Naive thymus-derived CD4-positive, alpha-beta T cell (primary cell): ENCODE measurements at regions of chr6 and their contacts with region 1.

Region 1: GRCh38 chr6:144095331-144096002 is at the start of gene SF3B5:
- DNase-seq: peak; percentile 86 to 99 (median 97)
- ATAC-seq: peak; percentile 98
- H3K4me3 ChIP-seq: peak within 1 kb of the TSS; percentile 98
- H3K4me3 Mint-ChIP-seq: peak within 1 kb of the TSS; percentile 93 to 100 (median 98)
- H3K27ac ChIP-seq: peak within 1 kb of the TSS; percentile 92
- H3K27ac Mint-ChIP-seq: peak within 1 kb of the TSS; percentile 96 to 100 (median 98)
- H3K4me1 ChIP-seq: peaks cover 13 to 14% of the 10 kb centered on the region in 2 donors
- H3K4me1 Mint-ChIP-seq: peaks cover 15 to 38% (median 32%) of the 10 kb centered on the region in 7 donors
- H3K27me3 ChIP-seq: no peaks in the 10 kb centered on the region
- H3K27me3 Mint-ChIP-seq: peaks cover 0 to 10% (median 0%) of the 10 kb centered on the region in 5 donors
- total RNA-seq, gene SF3B5: 89.2 to 155 (median 122) TPM

Region 2: GRCh38 chr6:143060354-143060805 is 1035.1 kb before region 1 on chr6:
- CTCF ChIA-PET with region 1: no interaction called
- POLR2A ChIA-PET with region 1: no interaction called
- intact Hi-C with region 1: loop called in 1 of 2 experiments (anchors 2 kb)
- DNase-seq: peak; percentile 63 to 82 (median 72)
- ATAC-seq: peak; percentile 85
- H3K4me3 ChIP-seq: peak overlapping the region; percentile 73
- H3K4me3 Mint-ChIP-seq: peak overlapping the region; percentile 88 to 98 (median 94)
- H3K27ac ChIP-seq: peak overlapping the region; percentile 79
- H3K27ac Mint-ChIP-seq: peak overlapping the region; percentile 92 to 98 (median 96)
- H3K4me1 ChIP-seq: peaks cover 8% of the 10 kb centered on the region in 2 donors
- H3K4me1 Mint-ChIP-seq: peaks cover 16 to 34% (median 28%) of the 10 kb centered on the region in 7 donors
- H3K27me3 ChIP-seq: no peaks in the 10 kb centered on the region
- H3K27me3 Mint-ChIP-seq: no peaks in the 10 kb centered on the region

Region 3: GRCh38 chr6:143575440-143575839 is 520.0 kb before region 1 on chr6:
- CTCF ChIA-PET with region 1: no interaction called
- POLR2A ChIA-PET with region 1: no interaction called
- intact Hi-C with region 1: loop called (anchors 1 kb)
- DNase-seq: peak in 8 of 9 donors; percentile 34 to 79 (median 67)
- ATAC-seq: peak; percentile 99
- H3K4me3 ChIP-seq: no peak overlapping the region
- H3K4me3 Mint-ChIP-seq: no peak overlapping the region
- H3K27ac ChIP-seq: no peak overlapping the region
- H3K27ac Mint-ChIP-seq: peak overlapping the region in 1 of 9 donors; percentile 15
- H3K4me1 ChIP-seq: no peaks in the 10 kb centered on the region
- H3K4me1 Mint-ChIP-seq: peaks cover 0 to 9% (median 0%) of the 10 kb centered on the region in 7 donors
- H3K27me3 ChIP-seq: no peaks in the 10 kb centered on the region
- H3K27me3 Mint-ChIP-seq: no peaks in the 10 kb centered on the region

Region 4: GRCh38 chr6:144013486-144013909 is 82.0 kb before region 1 on chr6:
- CTCF ChIA-PET with region 1: no interaction called
- POLR2A ChIA-PET with region 1: interaction called, 3 read pairs
- intact Hi-C with region 1: loop called (anchors 2 to 5 kb)
- DNase-seq: peak; percentile 18 to 58 (median 45)
- ATAC-seq: peak; percentile 54
- H3K4me3 ChIP-seq: no peak overlapping the region
- H3K4me3 Mint-ChIP-seq: no peak overlapping the region
- H3K27ac ChIP-seq: no peak overlapping the region
- H3K27ac Mint-ChIP-seq: peak overlapping the region in 1 of 9 donors; percentile 9
- H3K4me1 ChIP-seq: no peaks in the 10 kb centered on the region
- H3K4me1 Mint-ChIP-seq: peaks cover 0 to 4% (median 0%) of the 10 kb centered on the region in 7 donors
- H3K27me3 ChIP-seq: peaks cover 0 to 6% of the 10 kb centered on the region in 2 donors
- H3K27me3 Mint-ChIP-seq: peaks cover 11 to 45% (median 28%) of the 10 kb centered on the region in 5 donors

Region 5: GRCh38 chr6:144115219-144115618 is 19.8 kb after region 1 on chr6:
- CTCF ChIA-PET with region 1: no interaction called
- POLR2A ChIA-PET with region 1: no interaction called
- intact Hi-C with region 1: no loop called
- DNase-seq: no peak
- ATAC-seq: no peak
- H3K4me3 ChIP-seq: no peak overlapping the region
- H3K4me3 Mint-ChIP-seq: no peak overlapping the region
- H3K27ac ChIP-seq: no peak overlapping the region
- H3K27ac Mint-ChIP-seq: no peak overlapping the region
- H3K4me1 ChIP-seq: no peaks in the 10 kb centered on the region
- H3K4me1 Mint-ChIP-seq: no peaks in the 10 kb centered on the region
- H3K27me3 ChIP-seq: no peaks in the 10 kb centered on the region
- H3K27me3 Mint-ChIP-seq: peaks cover 0 to 7% (median 0%) of the 10 kb centered on the region in 5 donors

Region 6: GRCh38 chr6:144149891-144150709 is 54.6 kb after region 1 on chr6 and contains the start of gene STX11:
- CTCF ChIA-PET with region 1: no interaction called
- POLR2A ChIA-PET with region 1: interaction called, 3 read pairs
- intact Hi-C with region 1: loop called (anchors 1 kb)
- DNase-seq: peak; percentile 37 to 88 (median 51)
- ATAC-seq: peak; percentile 86
- H3K4me3 ChIP-seq: peak within 1 kb of the TSS; percentile 69
- H3K4me3 Mint-ChIP-seq: peak within 1 kb of the TSS; percentile 91 to 98 (median 95)
- H3K27ac ChIP-seq: peak within 1 kb of the TSS; percentile 62
- H3K27ac Mint-ChIP-seq: peak within 1 kb of the TSS; percentile 89 to 98 (median 94)
- H3K4me1 ChIP-seq: peaks cover 0 to 17% of the 10 kb centered on the region in 2 donors
- H3K4me1 Mint-ChIP-seq: peaks cover 6 to 43% (median 15%) of the 10 kb centered on the region in 7 donors
- H3K27me3 ChIP-seq: no peaks in the 10 kb centered on the region
- H3K27me3 Mint-ChIP-seq: peaks cover 0 to 2% (median 0%) of the 10 kb centered on the region in 5 donors
- total RNA-seq, gene STX11: 2.6 to 60.5 (median 11.6) TPM

Region 7: GRCh38 chr6:144334131-144334708 is 238.8 kb after region 1 on chr6:
- CTCF ChIA-PET with region 1: no interaction called
- POLR2A ChIA-PET with region 1: interaction called, 3 read pairs
- intact Hi-C with region 1: loop called in 1 of 2 experiments (anchors 1 kb)
- DNase-seq: peak; percentile 24 to 87 (median 83)
- ATAC-seq: peak; percentile 91
- H3K4me3 ChIP-seq: peak overlapping the region; percentile 59
- H3K4me3 Mint-ChIP-seq: peak overlapping the region; percentile 80 to 93 (median 86)
- H3K27ac ChIP-seq: peak overlapping the region; percentile 75
- H3K27ac Mint-ChIP-seq: peak overlapping the region; percentile 87 to 98 (median 96)
- H3K4me1 ChIP-seq: peaks cover 34 to 41% of the 10 kb centered on the region in 2 donors
- H3K4me1 Mint-ChIP-seq: peaks cover 40 to 74% (median 59%) of the 10 kb centered on the region in 7 donors
- H3K27me3 ChIP-seq: no peaks in the 10 kb centered on the region
- H3K27me3 Mint-ChIP-seq: no peaks in the 10 kb centered on the region

Region 8: DNA sequence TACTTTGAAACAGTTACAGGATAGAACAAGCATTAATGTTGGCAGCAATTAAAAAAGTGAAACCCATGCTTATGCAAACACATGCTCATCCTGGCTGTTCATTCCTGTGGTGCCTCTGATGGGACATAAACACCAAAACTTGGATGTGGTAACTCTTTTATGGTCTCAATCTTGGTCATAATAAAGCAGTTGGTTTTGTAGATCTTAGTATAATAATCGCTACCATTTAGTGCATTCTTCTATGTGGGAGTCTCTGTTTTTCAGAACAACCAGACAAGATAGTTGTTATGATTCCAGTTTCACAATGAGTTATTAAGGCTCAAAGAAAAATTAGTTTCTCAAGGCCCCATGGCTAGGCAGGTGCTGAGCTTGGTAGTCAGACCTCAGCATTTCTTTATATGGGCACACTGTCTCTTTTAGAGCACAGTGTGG is 373.7 kb after region 1 on chr6:
- CTCF ChIA-PET with region 1: no interaction called
- POLR2A ChIA-PET with region 1: no interaction called
- intact Hi-C with region 1: no loop called
- DNase-seq: no peak
- ATAC-seq: no peak
- H3K4me3 ChIP-seq: peak overlapping the region; percentile 10
- H3K4me3 Mint-ChIP-seq: peak overlapping the region in 8 of 10 donors; percentile 33 to 82 (median 65)
- H3K27ac ChIP-seq: peak overlapping the region; percentile 12
- H3K27ac Mint-ChIP-seq: peak overlapping the region; percentile 9 to 87 (median 79)
- H3K4me1 ChIP-seq: peaks cover 11 to 14% of the 10 kb centered on the region in 2 donors
- H3K4me1 Mint-ChIP-seq: peaks cover 11 to 34% (median 29%) of the 10 kb centered on the region in 7 donors
- H3K27me3 ChIP-seq: no peaks in the 10 kb centered on the region
- H3K27me3 Mint-ChIP-seq: no peaks in the 10 kb centered on the region

Region 9: DNA sequence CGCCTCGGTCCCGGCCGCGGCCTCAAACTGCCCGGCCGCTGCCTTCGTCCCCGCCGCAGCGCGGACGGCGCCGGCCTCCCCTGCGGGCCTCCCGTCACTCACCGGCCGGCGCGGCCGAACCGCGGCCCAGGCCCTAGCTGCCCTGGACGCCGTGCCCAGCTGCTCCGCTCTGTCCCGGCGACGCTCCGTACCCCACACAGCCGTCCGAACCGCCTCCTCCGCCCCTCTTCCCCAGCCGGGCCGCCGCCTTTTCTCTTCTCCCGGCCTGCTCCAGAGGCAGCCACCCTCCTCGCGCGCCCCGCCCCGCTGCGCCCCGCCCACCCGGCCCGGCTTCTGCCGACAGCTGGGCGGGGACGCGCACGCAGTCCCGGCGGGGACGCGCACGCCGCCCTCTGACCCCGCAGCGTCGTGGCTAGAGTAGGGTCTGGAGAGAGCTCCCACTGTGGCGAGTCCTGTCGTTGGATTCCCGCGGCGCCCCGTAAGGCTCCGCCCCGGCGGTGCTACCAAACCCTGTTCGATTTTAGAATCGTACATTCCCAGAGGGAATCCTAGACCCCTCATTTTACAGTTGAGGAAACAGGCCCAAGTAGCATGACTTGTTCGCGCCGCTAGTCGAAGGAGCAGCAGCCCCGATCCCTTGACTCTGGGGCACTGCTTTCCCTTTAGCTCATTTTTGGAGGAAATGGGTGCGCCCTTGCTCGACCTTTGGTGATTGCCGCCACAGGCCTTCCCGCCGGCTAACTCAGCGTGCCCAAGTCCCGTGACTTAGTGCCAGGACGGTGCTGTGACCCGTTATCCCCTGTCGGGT is 1719.2 kb after region 1 on chr6 and contains the start of gene FBXO30:
- CTCF ChIA-PET with region 1: no interaction called
- POLR2A ChIA-PET with region 1: no interaction called
- intact Hi-C with region 1: loop called in 1 of 2 experiments (anchors 1 kb)
- DNase-seq: peak; percentile 81 to 94 (median 88)
- ATAC-seq: peak; percentile 98
- H3K4me3 ChIP-seq: peak within 1 kb of the TSS; percentile 92
- H3K4me3 Mint-ChIP-seq: peak within 1 kb of the TSS; percentile 91 to 96 (median 94)
- H3K27ac ChIP-seq: peak within 1 kb of the TSS; percentile 80
- H3K27ac Mint-ChIP-seq: peak within 1 kb of the TSS; percentile 83 to 96 (median 95)
- H3K4me1 ChIP-seq: peaks cover 0 to 18% of the 10 kb centered on the region in 2 donors
- H3K4me1 Mint-ChIP-seq: peaks cover 25 to 50% (median 41%) of the 10 kb centered on the region in 7 donors
- H3K27me3 ChIP-seq: no peaks in the 10 kb centered on the region
- H3K27me3 Mint-ChIP-seq: peaks cover 0 to 3% (median 0%) of the 10 kb centered on the region in 5 donors
- total RNA-seq, gene FBXO30: 1.6 to 5.1 (median 4.8) TPM

Region 10: DNA sequence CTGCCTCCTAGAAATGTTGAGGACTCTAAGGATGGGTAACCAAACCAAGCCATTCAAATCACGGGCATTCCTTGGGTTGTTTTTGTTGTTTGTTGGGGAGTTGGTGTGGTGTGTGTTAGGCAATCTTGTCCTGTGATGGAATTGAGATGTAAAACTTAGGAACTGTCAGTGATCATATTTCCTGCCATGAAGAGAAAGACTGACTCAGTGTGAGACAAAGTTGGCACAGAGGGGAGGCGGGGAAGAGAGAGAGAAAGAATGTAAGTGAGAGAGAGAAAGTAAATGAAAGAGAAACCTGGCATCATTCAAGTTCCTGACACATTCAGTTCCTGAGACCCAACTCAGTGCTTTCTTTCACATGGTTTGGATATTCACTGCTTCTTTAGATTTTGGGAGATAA is 1740.7 kb after region 1 on chr6:
- CTCF ChIA-PET with region 1: no interaction called
- POLR2A ChIA-PET with region 1: no interaction called
- intact Hi-C with region 1: no loop called
- DNase-seq: no peak
- ATAC-seq: no peak
- H3K4me3 ChIP-seq: no peak overlapping the region
- H3K4me3 Mint-ChIP-seq: no peak overlapping the region
- H3K27ac ChIP-seq: no peak overlapping the region
- H3K27ac Mint-ChIP-seq: no peak overlapping the region
- H3K4me1 ChIP-seq: no peaks in the 10 kb centered on the region
- H3K4me1 Mint-ChIP-seq: peaks cover 0 to 8% (median 0%) of the 10 kb centered on the region in 7 donors
- H3K27me3 ChIP-seq: no peaks in the 10 kb centered on the region
- H3K27me3 Mint-ChIP-seq: no peaks in the 10 kb centered on the region